Heart left ventricle (tissue), 16 donors: ENCODE measurements at regions of chr4 and their contacts with region 1.

Region 1: GRCh38 chr4:52983563-52984303 is 121.6 kb downstream of the RASL11B start:
- DNase-seq: no peak
- ATAC-seq: peak; percentile 48 to 81 (median 62)
- H3K4me3 ChIP-seq: no peak overlapping the region
- H3K27ac ChIP-seq: peak overlapping the region in 4 of 12 donors; percentile 1 to 28 (median 4)
- H3K4me1 ChIP-seq: peaks cover 0 to 22% (median 11%) of the 10 kb centered on the region in 12 donors
- H3K27me3 ChIP-seq: no peaks in the 10 kb centered on the region
- CTCF ChIP-seq: peak; percentile 59 to 86 (median 75)
- POLR2A ChIP-seq: no peak

Region 2: GRCh38 chr4:52234561-52235440 is 748.9 kb before region 1 on chr4:
- intact Hi-C with region 1: loop called (anchors 2 to 10 kb)
- DNase-seq: no peak
- ATAC-seq: peak; percentile 73 to 86 (median 78)
- H3K4me3 ChIP-seq: peak overlapping the region in 2 of 12 donors; percentile 2 to 6
- H3K27ac ChIP-seq: no peak overlapping the region
- H3K4me1 ChIP-seq: peaks cover 0 to 5% (median 0%) of the 10 kb centered on the region in 12 donors
- H3K27me3 ChIP-seq: peaks cover 0 to 3% (median 0%) of the 10 kb centered on the region in 9 donors
- CTCF ChIP-seq: peak in 11 of 12 donors; percentile 37 to 77 (median 64)
- POLR2A ChIP-seq: no peak

Region 3: DNA sequence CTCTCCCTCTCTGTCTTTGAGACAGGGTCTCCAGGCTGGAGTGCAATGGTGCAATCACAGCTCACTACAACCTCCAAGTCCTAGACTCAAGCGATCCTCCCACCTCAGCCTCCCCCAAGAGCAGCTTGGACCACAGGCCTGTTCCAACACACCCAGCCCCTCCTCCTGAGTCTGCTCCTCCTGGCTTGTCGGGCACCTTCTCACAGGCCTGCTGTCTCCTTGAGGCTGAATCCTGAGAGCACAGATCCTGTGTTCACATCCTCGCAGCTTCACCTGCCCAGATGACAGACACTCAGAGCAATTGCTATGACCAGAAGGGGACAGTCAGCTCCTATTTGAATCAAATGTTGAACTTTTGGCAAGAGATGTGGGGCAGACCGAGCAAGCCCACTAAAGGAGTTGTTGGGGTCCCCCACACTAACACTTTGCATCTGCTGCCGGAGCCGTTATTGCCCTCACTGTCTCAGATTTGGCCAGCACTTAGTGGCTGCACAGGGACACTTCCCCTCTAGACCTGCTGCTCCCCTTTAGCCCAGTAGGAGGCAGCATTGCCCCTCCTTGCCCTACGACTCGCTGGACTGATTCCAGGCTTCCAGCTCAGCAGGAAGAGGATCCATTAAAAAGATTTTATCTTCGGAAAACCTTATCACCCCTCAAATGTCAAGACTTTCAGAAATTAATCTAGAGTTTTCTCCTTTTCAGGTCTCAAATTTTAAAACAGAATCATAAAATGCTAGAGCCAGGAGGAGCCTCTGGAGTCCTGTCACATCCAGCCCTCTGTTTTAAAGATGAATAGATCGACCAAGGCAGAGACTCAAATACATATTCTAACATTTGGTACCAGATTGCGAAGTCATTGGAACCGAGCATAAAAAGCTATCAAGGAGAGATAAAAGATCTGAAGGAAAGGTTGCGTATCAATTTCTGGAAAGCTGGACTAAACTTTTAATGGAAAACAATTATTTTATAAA is 438.3 kb before region 1 on chr4:
- intact Hi-C with region 1: loop called (anchors 2 to 5 kb)
- DNase-seq: peak; percentile 68 to 85 (median 77)
- ATAC-seq: peak; percentile 65 to 88 (median 80)
- H3K4me3 ChIP-seq: peak overlapping the region in 4 of 12 donors; percentile 5 to 43 (median 30)
- H3K27ac ChIP-seq: peak overlapping the region in 8 of 12 donors; percentile 0 to 95 (median 70)
- H3K4me1 ChIP-seq: peaks cover 0 to 26% (median 15%) of the 10 kb centered on the region in 12 donors
- H3K27me3 ChIP-seq: no peaks in the 10 kb centered on the region
- CTCF ChIP-seq: peak; percentile 89 to 96 (median 95)
- POLR2A ChIP-seq: no peak

Region 4: DNA sequence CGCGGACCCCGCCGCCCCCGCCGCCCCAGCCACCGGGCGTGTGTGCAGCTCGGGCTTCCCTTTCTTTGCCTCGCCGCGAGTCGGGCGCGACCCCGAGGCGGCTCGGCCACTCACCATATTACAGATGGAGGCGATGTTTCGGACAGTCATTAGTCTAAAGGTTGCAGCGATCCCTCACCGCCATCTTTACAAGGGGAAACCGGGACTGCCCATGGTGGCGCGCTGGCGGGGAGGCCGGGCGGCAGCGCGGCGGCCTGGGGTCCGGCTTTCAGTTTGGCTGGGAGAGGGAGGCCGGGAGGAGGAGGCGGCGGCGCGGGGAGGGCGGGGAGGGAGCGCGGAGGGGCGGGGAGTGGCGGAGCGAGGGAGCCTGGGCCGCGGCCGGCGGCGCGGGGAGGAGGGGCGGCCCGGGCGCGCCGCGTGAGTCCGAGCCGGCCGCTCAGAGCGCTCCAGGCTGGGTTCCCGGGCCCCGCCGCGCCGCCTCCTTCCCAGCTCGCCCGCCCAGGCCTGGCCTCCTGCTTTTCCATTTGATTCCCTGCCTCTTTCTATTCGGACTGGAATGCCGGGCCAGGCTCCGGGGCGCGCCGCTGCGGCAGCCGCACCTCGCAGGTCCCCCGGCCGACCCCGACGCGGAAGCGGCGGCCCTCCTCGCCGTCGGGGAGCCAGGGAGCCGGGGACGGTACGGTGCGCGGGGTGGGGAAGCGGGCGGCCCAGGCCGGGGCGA is 324.6 kb before region 1 on chr4 and contains the start of gene USP46:
- intact Hi-C with region 1: loop called in 1 of 10 experiments (anchors 10 kb)
- DNase-seq: peak; percentile 84 to 90 (median 87)
- ATAC-seq: peak; percentile 60 to 96 (median 89)
- H3K4me3 ChIP-seq: peak within 1 kb of the TSS; percentile 60 to 98 (median 91)
- H3K27ac ChIP-seq: peak within 1 kb of the TSS; percentile 94 to 100 (median 98)
- H3K4me1 ChIP-seq: peaks cover 0 to 67% (median 40%) of the 10 kb centered on the region in 12 donors
- H3K27me3 ChIP-seq: no peaks in the 10 kb centered on the region
- CTCF ChIP-seq: no peak
- POLR2A ChIP-seq: peak in 1 of 2 donors; percentile 46
- total RNA-seq, gene USP46: 29.8 to 111 (median 75.3) TPM

Region 5: GRCh38 chr4:52712172-52712990 is 271.4 kb before region 1 on chr4:
- intact Hi-C with region 1: loop called in 4 of 10 experiments (anchors 5 to 10 kb)
- DNase-seq: peak; percentile 99
- ATAC-seq: peak; percentile 97 to 100 (median 99)
- H3K4me3 ChIP-seq: peak overlapping the region; percentile 51 to 96 (median 74)
- H3K27ac ChIP-seq: peak overlapping the region; percentile 86 to 98 (median 93)
- H3K4me1 ChIP-seq: peaks cover 6 to 32% (median 24%) of the 10 kb centered on the region in 12 donors
- H3K27me3 ChIP-seq: no peaks in the 10 kb centered on the region
- CTCF ChIP-seq: no peak
- POLR2A ChIP-seq: peak; percentile 77 to 95

Region 6: GRCh38 chr4:52869196-52869595 is 114.5 kb before region 1 on chr4:
- intact Hi-C with region 1: loop called in 2 of 10 experiments (anchors 5 kb)
- DNase-seq: peak; percentile 74 to 86 (median 81)
- ATAC-seq: peak; percentile 34 to 69 (median 55)
- H3K4me3 ChIP-seq: peak overlapping the region in 1 of 12 donors; percentile 6
- H3K27ac ChIP-seq: peak overlapping the region in 10 of 12 donors; percentile 34 to 81 (median 58)
- H3K4me1 ChIP-seq: peaks cover 0 to 76% (median 47%) of the 10 kb centered on the region in 12 donors
- H3K27me3 ChIP-seq: no peaks in the 10 kb centered on the region
- CTCF ChIP-seq: no peak
- POLR2A ChIP-seq: no peak

Region 7: GRCh38 chr4:53233114-53233795 is 249.5 kb after region 1 on chr4:
- intact Hi-C with region 1: no loop called
- DNase-seq: no peak
- ATAC-seq: no peak
- H3K4me3 ChIP-seq: no peak overlapping the region
- H3K27ac ChIP-seq: no peak overlapping the region
- H3K4me1 ChIP-seq: peaks cover 0 to 14% (median 0%) of the 10 kb centered on the region in 12 donors
- H3K27me3 ChIP-seq: no peaks in the 10 kb centered on the region
- CTCF ChIP-seq: no peak
- POLR2A ChIP-seq: no peak